Caco-2 (cell line): ENCODE measurements at regions of chr17 and their contacts with region 1.

Region 1: GRCh38 chr17:46092991-46093390 is 93.9 kb downstream of the STH start:
- DNase-seq: no peak
- H3K4me3 ChIP-seq: no peak overlapping the region
- H3K4me3 Mint-ChIP-seq: no peak overlapping the region
- H3K27ac Mint-ChIP-seq: no peak overlapping the region
- H3K4me1 ChIP-seq: no peaks in the 10 kb centered on the region
- H3K4me1 Mint-ChIP-seq: peaks cover 6% of the 10 kb centered on the region
- H3K27me3 ChIP-seq: no peaks in the 10 kb centered on the region
- H3K27me3 Mint-ChIP-seq: no peaks in the 10 kb centered on the region
- CTCF ChIP-seq: no peak

Region 2: GRCh38 chr17:45852535-45853297 is 240.3 kb before region 1 on chr17:
- CTCF ChIA-PET with region 1: no interaction called
- POLR2A ChIA-PET with region 1: no interaction called
- intact Hi-C with region 1: no loop called
- DNase-seq: peak; percentile 66 to 76
- H3K4me3 ChIP-seq: no peak overlapping the region
- H3K4me3 Mint-ChIP-seq: no peak overlapping the region
- H3K27ac Mint-ChIP-seq: no peak overlapping the region
- H3K4me1 ChIP-seq: peaks cover 1% of the 10 kb centered on the region; the same call in 1 of the 2 replicates
- H3K4me1 Mint-ChIP-seq: peaks cover 1% of the 10 kb centered on the region
- H3K27me3 ChIP-seq: no peaks in the 10 kb centered on the region; the same call in 1 of the 2 replicates
- H3K27me3 Mint-ChIP-seq: peaks cover 14% of the 10 kb centered on the region
- CTCF ChIP-seq: peak; percentile 90 to 92

Region 3: DNA sequence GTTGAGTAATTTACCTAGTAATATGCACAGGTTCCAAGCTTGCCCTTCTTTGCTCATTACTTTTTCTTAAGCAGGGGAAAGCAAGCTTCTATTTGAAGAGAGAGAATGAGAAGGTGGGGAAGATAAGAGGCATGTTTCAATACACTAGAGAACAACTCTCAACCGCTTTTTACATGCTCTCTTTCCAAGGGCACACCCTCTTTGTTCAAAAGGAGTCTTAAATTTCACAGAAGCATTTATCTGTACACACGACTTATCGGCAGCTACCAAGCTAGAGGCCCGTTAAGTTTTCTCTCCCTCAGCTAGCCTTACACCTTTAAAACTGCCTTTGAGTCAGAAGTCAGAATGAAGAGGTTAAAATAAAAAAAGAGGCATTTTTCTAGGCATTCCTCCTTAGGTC is 14.3 kb before region 1 on chr17:
- CTCF ChIA-PET with region 1: no interaction called
- POLR2A ChIA-PET with region 1: no interaction called
- intact Hi-C with region 1: loop called (anchors 2 kb)
- DNase-seq: no peak
- H3K4me3 ChIP-seq: no peak overlapping the region
- H3K4me3 Mint-ChIP-seq: no peak overlapping the region
- H3K27ac Mint-ChIP-seq: peak overlapping the region; percentile 4
- H3K4me1 ChIP-seq: peaks cover 12% of the 10 kb centered on the region
- H3K4me1 Mint-ChIP-seq: peaks cover 7% of the 10 kb centered on the region
- H3K27me3 ChIP-seq: no peaks in the 10 kb centered on the region
- H3K27me3 Mint-ChIP-seq: no peaks in the 10 kb centered on the region
- CTCF ChIP-seq: no peak